Activated CD4-positive, alpha-beta memory T cell treated with anti-CD3 and anti-CD28 coated beads for 36 hours (primary cell): ENCODE measurements at regions of chr1 and their contacts with region 1.

Region 1: GRCh38 chr1:9201401-9202239 is 33.0 kb upstream of the H6PD start:
- DNase-seq: no peak
- H3K4me3 Mint-ChIP-seq: no peak overlapping the region
- H3K27ac Mint-ChIP-seq: no peak overlapping the region
- H3K4me1 Mint-ChIP-seq: peaks cover 34% of the 10 kb centered on the region
- H3K27me3 Mint-ChIP-seq: peaks cover 83% of the 10 kb centered on the region

Region 2: GRCh38 chr1:9135073-9135836 is 66.4 kb before region 1 on chr1:
- CTCF ChIA-PET with region 1: interaction called, 23 read pairs
- POLR2A ChIA-PET with region 1: no interaction called
- intact Hi-C with region 1: no loop called
- DNase-seq: no peak
- H3K4me3 Mint-ChIP-seq: no peak overlapping the region
- H3K27ac Mint-ChIP-seq: no peak overlapping the region
- H3K4me1 Mint-ChIP-seq: peaks cover 13% of the 10 kb centered on the region
- H3K27me3 Mint-ChIP-seq: peaks cover 3% of the 10 kb centered on the region